ENCODE measurements at regions of chr2 and their contacts with region 1.

Region 1: GRCh38 chr2:197434541-197435513 is at the start of gene SF3B1:
- DNase-seq: peak; percentile 96
- ATAC-seq: peak; percentile 89
- H3K4me3 Mint-ChIP-seq: peak within 1 kb of the TSS; percentile 99
- H3K27ac Mint-ChIP-seq: peak within 1 kb of the TSS; percentile 99
- H3K4me1 Mint-ChIP-seq: peaks cover 35% of the 10 kb centered on the region
- H3K27me3 Mint-ChIP-seq: no peaks in the 10 kb centered on the region
- CTCF ChIP-seq: no peak
- total RNA-seq, gene SF3B1: 277 to 321 TPM (median 296 TPM) in 3 replicates

Region 2: DNA sequence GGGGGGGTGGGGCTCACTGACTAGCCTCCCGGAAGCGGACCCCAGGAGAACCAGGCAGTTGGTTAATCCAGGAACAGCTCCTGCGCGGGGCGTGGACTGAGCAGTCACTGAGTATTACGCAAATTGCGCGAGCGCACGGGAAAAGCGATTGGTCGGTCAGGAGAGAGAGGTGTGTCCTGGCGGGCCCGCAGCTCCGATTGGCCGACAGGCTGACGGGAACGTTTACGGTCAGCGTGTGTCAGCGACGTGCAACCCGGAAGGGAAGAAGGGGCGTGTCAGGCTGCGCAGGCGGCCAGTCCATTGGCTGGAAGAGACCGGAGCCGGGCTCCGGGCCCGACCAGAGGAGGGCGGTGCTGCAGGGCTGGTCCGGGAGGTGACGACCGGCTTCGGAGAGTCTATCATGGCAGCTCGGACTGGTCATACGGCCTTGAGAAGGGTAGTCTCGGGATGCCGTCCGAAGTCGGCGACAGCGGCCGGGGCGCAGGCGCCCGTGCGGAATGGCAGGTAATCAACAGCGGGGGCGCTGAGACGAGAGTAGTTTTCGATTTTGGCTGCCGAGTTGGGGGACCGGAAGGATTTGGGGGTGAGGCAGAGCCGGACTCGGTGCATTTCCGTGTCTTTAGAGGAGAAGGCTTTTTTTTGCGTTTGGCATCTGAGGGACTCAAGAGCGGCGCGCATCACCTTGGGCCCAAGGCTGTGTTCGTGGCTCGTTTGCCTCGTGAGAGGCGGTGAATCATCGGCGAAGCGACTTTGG is 18.5 kb after region 1 on chr2 and contains the start of gene COQ10B:
- CTCF ChIA-PET with region 1: interaction called, 3 read pairs
- POLR2A ChIA-PET with region 1: interaction called, 27 read pairs
- DNase-seq: peak; percentile 99
- ATAC-seq: peak; percentile 94
- H3K4me3 Mint-ChIP-seq: peak within 1 kb of the TSS; percentile 100
- H3K27ac Mint-ChIP-seq: peak within 1 kb of the TSS; percentile 100
- H3K4me1 Mint-ChIP-seq: peaks cover 10% of the 10 kb centered on the region
- H3K27me3 Mint-ChIP-seq: no peaks in the 10 kb centered on the region; the same call in 1 of the 2 replicates
- CTCF ChIP-seq: no peak
- total RNA-seq, gene COQ10B: 17.7 to 21.7 TPM (median 19.9 TPM) in 3 replicates

Region 3: DNA sequence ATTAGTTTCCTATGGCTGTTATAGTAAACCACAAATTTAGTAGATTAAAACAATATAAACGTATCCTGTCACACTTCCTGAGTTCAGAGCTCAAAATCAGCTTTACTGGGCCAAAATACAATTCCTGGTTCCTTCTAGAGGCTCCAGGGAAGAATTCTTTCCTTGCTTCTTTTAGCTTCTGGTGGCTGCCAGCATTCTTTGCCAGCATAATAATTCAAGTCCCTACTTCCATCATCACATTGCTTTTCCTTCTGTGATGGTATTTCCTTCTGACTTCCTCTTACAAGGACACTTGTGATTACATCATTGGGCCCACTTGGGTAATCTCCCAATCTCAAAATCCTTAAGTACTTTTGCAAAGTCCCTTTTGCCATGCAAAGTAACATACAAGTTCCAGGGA is 121.6 kb after region 1 on chr2:
- CTCF ChIA-PET with region 1: no interaction called
- POLR2A ChIA-PET with region 1: no interaction called
- DNase-seq: no peak
- ATAC-seq: no peak
- H3K4me3 Mint-ChIP-seq: no peak overlapping the region
- H3K27ac Mint-ChIP-seq: peak overlapping the region; percentile 7; the same call in 1 of the 2 replicates
- H3K4me1 Mint-ChIP-seq: peaks cover 6% of the 10 kb centered on the region; the same call in 1 of the 2 replicates
- H3K27me3 Mint-ChIP-seq: no peaks in the 10 kb centered on the region
- CTCF ChIP-seq: no peak

Region 4: GRCh38 chr2:197707316-197708213 is 272.7 kb after region 1 on chr2:
- CTCF ChIA-PET with region 1: no interaction called
- POLR2A ChIA-PET with region 1: no interaction called
- DNase-seq: no peak
- ATAC-seq: no peak
- H3K4me3 Mint-ChIP-seq: peak overlapping the region; percentile 84
- H3K27ac Mint-ChIP-seq: peak overlapping the region; percentile 70; the same call in 1 of the 2 replicates
- H3K4me1 Mint-ChIP-seq: peaks cover 39% of the 10 kb centered on the region
- H3K27me3 Mint-ChIP-seq: no peaks in the 10 kb centered on the region
- CTCF ChIP-seq: peak; percentile 59

Measured in WTC11 (cell line).